Adrenal gland (tissue), 19 donors: ENCODE measurements at regions of chr5 and their contacts with region 1.

Region 1: DNA sequence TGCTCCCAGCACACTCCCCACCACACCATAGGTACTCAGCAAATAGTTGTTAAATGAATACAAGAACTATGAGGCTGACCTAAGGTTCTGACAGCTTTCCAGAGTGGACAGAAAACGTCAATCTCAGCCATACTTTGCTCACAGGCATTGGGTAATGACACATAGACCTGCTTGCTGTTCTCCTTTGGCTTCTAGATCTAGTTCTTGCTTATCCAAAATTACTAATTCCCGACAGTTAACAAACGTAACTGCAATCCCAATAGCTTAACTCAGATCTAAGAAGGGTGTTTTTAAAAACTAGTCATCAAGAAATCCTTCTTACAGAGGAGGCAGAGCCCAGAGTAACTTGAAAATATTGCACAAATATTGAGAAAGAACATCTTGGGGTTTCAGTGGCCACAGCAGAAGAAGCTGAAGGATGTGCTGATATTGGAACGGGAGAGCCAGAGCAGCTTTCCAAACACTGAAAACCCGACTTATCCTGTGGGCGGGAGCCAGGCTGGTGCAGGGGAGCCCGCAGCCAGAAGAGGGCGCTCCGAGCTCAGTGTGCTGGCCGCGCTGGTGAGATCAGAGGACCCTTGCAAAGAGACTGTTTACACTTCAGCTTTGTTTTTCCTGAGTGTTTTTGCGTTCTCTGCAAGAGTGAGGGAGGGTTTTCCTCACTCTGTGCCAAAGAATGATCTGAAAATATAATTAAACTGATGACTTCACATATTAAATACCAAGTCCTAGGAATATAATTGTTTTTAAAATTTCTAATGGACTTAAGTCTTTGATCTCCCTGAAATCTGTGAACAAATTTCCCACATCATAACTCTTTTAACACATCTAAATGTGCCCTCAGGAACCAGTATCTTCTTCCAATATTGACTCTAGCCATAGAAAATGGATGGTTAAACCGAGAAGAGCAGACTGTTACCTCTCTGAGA is 30.3 kb downstream of the FGF1 start:
- DNase-seq: peak; percentile 71 to 93 (median 83)
- H3K4me3 ChIP-seq: no peak overlapping the region
- H3K27ac ChIP-seq: peak overlapping the region in 2 of 5 donors; percentile 13 to 65
- H3K4me1 ChIP-seq: peaks cover 0 to 14% of the 10 kb centered on the region in 2 donors
- H3K27me3 ChIP-seq: peaks cover 5% of the 10 kb centered on the region
- CTCF ChIP-seq: peak; percentile 83 to 98 (median 94)
- POLR2A ChIP-seq: no peak

Region 2: DNA sequence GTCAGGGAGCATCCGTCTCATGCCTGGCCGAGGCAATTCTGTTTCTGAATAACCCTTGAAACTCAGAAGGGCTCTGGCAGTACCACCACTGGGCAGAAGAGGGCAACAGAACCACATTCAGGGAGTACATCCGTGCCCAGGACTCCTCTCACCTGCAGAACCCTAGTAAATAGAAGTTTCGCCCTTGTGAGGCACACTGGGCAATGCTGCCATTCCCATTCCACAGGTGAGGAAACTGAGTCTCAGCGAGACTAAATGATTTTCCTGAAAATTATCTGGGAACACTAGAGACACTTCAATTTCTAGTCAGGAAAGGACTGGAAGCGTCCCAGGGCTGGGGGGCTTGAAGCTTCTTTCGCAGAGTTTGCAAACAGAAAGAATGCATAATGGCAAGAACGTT is 44.4 kb before region 1 on chr5:
- intact Hi-C with region 1: loop called (anchors 5 kb)
- DNase-seq: peak; percentile 73 to 95 (median 78)
- H3K4me3 ChIP-seq: no peak overlapping the region
- H3K27ac ChIP-seq: no peak overlapping the region
- H3K4me1 ChIP-seq: no peaks in the 10 kb centered on the region
- H3K27me3 ChIP-seq: peaks cover 4% of the 10 kb centered on the region
- CTCF ChIP-seq: peak; percentile 75 to 96 (median 94)
- POLR2A ChIP-seq: no peak

Region 3: DNA sequence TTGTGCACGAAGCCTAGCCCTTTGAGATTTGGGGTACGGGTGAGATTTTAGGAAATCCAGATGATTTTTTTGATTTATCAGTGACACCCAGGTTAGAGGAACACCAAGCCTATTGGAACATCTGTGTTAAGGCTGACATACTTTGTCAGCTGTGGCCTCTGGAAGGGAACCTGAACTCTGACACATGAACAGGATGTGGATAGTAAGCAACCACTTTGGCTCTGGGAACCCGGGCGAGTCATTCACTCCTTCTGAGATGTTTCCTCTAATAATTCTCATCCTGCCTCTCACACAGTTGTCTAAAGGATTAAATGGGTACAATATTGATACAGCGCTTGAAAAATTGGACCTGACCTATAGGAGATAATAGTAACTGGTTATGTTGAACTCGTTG is 37.5 kb before region 1 on chr5:
- intact Hi-C with region 1: loop called (anchors 5 kb)
- DNase-seq: peak in 1 of 7 donors; percentile 16
- H3K4me3 ChIP-seq: no peak overlapping the region
- H3K27ac ChIP-seq: no peak overlapping the region
- H3K4me1 ChIP-seq: no peaks in the 10 kb centered on the region
- H3K27me3 ChIP-seq: no peaks in the 10 kb centered on the region
- CTCF ChIP-seq: no peak
- POLR2A ChIP-seq: no peak